ENCODE measurements at regions of chr11 and their contacts with region 1.

Region 1: GRCh38 chr11:6298605-6299004 is 21.7 kb downstream of the CAVIN3 start:
- DNase-seq: no peak
- H3K4me3 ChIP-seq: no peak overlapping the region
- H3K27ac ChIP-seq: no peak overlapping the region
- H3K4me1 ChIP-seq: no peaks in the 10 kb centered on the region
- H3K27me3 ChIP-seq: no peaks in the 10 kb centered on the region
- CTCF ChIP-seq: no peak
- EP300 ChIP-seq: no peak
- POLR2A ChIP-seq: no peak

Region 2: GRCh38 chr11:6353367-6353987 is 54.9 kb after region 1 on chr11:
- intact Hi-C with region 1: loop called in 1 of 4 experiments (anchors 10 kb)
- DNase-seq: peak; percentile 42 to 66 (median 60)
- H3K4me3 ChIP-seq: no peak overlapping the region
- H3K27ac ChIP-seq: no peak overlapping the region
- H3K4me1 ChIP-seq: no peaks in the 10 kb centered on the region
- H3K27me3 ChIP-seq: no peaks in the 10 kb centered on the region
- CTCF ChIP-seq: peak; percentile 75 to 91 (median 84)
- EP300 ChIP-seq: no peak
- POLR2A ChIP-seq: no peak